Activated CD4-positive, alpha-beta memory T cell treated with anti-CD3 and anti-CD28 coated beads, Interleukin-2, amount 10 ng/mL, durations not matched to agents 7 days and 5 days (primary cell): ENCODE measurements at regions of chr22 and their contacts with region 1.

Region 1: GRCh38 chr22:23675492-23676415 is 15.1 kb upstream of the RGL4 start:
- DNase-seq: peak; percentile 53
- H3K4me3 Mint-ChIP-seq: no peak overlapping the region
- H3K27ac Mint-ChIP-seq: peak overlapping the region; percentile 66
- H3K4me1 Mint-ChIP-seq: peaks cover 35% of the 10 kb centered on the region
- H3K27me3 Mint-ChIP-seq: no peaks in the 10 kb centered on the region

Region 2: GRCh38 chr22:23696326-23696851 is 20.6 kb after region 1 on chr22:
- CTCF ChIA-PET with region 1: no interaction called
- POLR2A ChIA-PET with region 1: interaction called, 12 read pairs
- DNase-seq: peak; percentile 89
- H3K4me3 Mint-ChIP-seq: peak overlapping the region; percentile 93
- H3K27ac Mint-ChIP-seq: peak overlapping the region; percentile 99
- H3K4me1 Mint-ChIP-seq: peaks cover 46% of the 10 kb centered on the region
- H3K27me3 Mint-ChIP-seq: no peaks in the 10 kb centered on the region